Right ventricle myocardium superior (tissue), 1 donor: ENCODE measurements at regions of chr14 and their contacts with region 1.

Region 1: DNA sequence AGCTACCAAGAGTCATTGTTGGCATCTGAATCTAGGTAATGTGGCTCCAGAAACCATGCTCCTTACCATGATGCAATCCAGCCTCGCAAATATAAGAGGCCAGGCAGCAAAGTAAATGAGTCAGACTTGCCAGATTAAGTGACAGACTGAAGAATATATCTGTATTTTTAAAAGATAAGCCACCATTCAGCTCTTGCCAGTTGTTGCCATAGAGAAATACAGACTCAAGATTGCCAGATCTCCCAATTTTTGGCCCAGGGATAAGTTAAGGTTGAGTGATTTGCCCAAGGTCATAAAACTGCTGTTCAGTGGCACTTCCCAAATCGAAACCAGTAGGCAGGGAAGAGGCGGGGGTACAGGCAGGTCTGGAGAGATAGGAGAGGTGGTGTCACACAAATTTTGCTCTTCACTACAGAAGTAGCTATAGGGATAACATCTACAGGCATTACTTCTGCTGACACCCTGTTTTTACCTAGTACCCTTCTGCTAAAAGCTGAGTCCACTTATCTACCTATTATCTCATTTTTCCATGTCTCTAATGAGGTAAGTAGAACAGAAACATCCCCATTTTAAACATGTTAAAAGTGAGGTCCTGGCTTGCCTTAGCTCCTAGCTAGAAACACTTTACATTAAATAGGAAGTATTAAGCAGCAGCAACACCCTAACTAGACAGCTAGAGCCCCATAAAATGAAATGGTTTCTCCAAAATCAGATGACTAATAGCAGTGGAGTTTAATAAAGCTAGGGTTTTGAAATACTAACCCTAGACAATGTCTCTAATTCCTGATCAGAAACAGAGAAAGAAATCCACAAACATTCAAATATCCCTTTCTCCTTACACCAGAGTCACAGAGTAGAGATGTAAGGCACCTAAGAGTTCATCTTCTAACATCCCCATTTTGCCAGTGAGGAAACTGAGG is 19.5 kb downstream of the DCAF5 start:
- DNase-seq: no peak
- ATAC-seq: peak; percentile 21

Region 2: GRCh38 chr14:68862954-68863594 is 270.4 kb before region 1 on chr14:
- intact Hi-C with region 1: no loop called
- DNase-seq: peak; percentile 88
- ATAC-seq: peak; percentile 90

Region 3: DNA sequence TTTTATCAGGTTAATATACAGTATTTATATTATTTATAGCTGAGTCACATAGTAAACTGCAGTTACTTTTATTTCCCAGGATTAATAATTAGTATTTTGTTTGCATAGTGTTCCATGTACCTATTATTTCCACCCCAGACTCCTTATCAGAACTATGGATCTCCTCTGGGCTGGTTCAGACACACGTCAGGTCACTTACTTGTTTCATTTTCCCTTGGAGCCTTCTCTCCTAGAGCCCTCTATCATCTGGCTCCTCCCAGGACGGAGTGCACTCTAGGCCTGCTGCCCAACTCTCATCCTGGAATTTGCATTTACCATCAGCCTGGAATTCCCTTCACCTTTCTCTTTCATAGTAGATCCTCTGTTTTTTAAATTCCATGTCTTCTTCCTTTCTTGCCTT is 98.0 kb after region 1 on chr14:
- intact Hi-C with region 1: loop called (anchors 10 kb)
- DNase-seq: no peak
- ATAC-seq: peak; percentile 76

Region 4: GRCh38 chr14:69460093-69460701 is 326.7 kb after region 1 on chr14:
- intact Hi-C with region 1: loop called (anchors 10 kb)
- DNase-seq: no peak
- ATAC-seq: peak; percentile 88